ENCODE measurements at regions of chr7 and their contacts with region 1.

Region 1: GRCh38 chr7:3300651-3301378 is at the start of gene SDK1:
- DNase-seq: peak; percentile 84 to 96 (median 93)
- ATAC-seq: peak; percentile 94
- H3K4me3 ChIP-seq: peak within 1 kb of the TSS; percentile 53
- H3K4me3 Mint-ChIP-seq: peak within 1 kb of the TSS; percentile 39 to 94 (median 89)
- H3K27ac ChIP-seq: no peak within 1 kb of the TSS
- H3K27ac Mint-ChIP-seq: peak within 1 kb of the TSS in 6 of 9 donors; percentile 51 to 80 (median 70)
- H3K4me1 ChIP-seq: peaks cover 5 to 7% of the 10 kb centered on the region in 2 donors
- H3K4me1 Mint-ChIP-seq: peaks cover 7 to 26% (median 12%) of the 10 kb centered on the region in 7 donors
- H3K27me3 ChIP-seq: no peaks in the 10 kb centered on the region
- H3K27me3 Mint-ChIP-seq: peaks cover 4 to 55% (median 7%) of the 10 kb centered on the region in 5 donors
- total RNA-seq, gene SDK1: 0.07 to 2.5 (median 0.54) TPM

Region 2: GRCh38 chr7:3250725-3251124 is 50.1 kb before region 1 on chr7:
- CTCF ChIA-PET with region 1: no interaction called
- POLR2A ChIA-PET with region 1: no interaction called
- intact Hi-C with region 1: no loop called
- DNase-seq: no peak
- ATAC-seq: no peak
- H3K4me3 ChIP-seq: no peak overlapping the region
- H3K4me3 Mint-ChIP-seq: no peak overlapping the region
- H3K27ac ChIP-seq: no peak overlapping the region
- H3K27ac Mint-ChIP-seq: no peak overlapping the region
- H3K4me1 ChIP-seq: no peaks in the 10 kb centered on the region
- H3K4me1 Mint-ChIP-seq: peaks cover 0 to 4% (median 0%) of the 10 kb centered on the region in 7 donors
- H3K27me3 ChIP-seq: no peaks in the 10 kb centered on the region
- H3K27me3 Mint-ChIP-seq: peaks cover 0 to 9% (median 0%) of the 10 kb centered on the region in 5 donors

Region 3: GRCh38 chr7:3461923-3462322 is 161.1 kb after region 1 on chr7:
- CTCF ChIA-PET with region 1: interaction called, 3 read pairs
- POLR2A ChIA-PET with region 1: no interaction called
- intact Hi-C with region 1: loop called (anchors 1 to 2 kb)
- DNase-seq: peak; percentile 11 to 91 (median 86)
- ATAC-seq: peak; percentile 96
- H3K4me3 ChIP-seq: peak overlapping the region; percentile 19
- H3K4me3 Mint-ChIP-seq: peak overlapping the region; percentile 21 to 92 (median 81)
- H3K27ac ChIP-seq: peak overlapping the region; percentile 70
- H3K27ac Mint-ChIP-seq: peak overlapping the region; percentile 76 to 96 (median 93)
- H3K4me1 ChIP-seq: peaks cover 15 to 45% of the 10 kb centered on the region in 2 donors
- H3K4me1 Mint-ChIP-seq: peaks cover 20 to 90% (median 77%) of the 10 kb centered on the region in 7 donors
- H3K27me3 ChIP-seq: no peaks in the 10 kb centered on the region
- H3K27me3 Mint-ChIP-seq: no peaks in the 10 kb centered on the region

Region 4: GRCh38 chr7:3482147-3482964 is 181.5 kb after region 1 on chr7:
- CTCF ChIA-PET with region 1: no interaction called
- POLR2A ChIA-PET with region 1: no interaction called
- intact Hi-C with region 1: loop called in 1 of 2 experiments (anchors 5 kb)
- DNase-seq: no peak
- ATAC-seq: no peak
- H3K4me3 ChIP-seq: no peak overlapping the region
- H3K4me3 Mint-ChIP-seq: no peak overlapping the region
- H3K27ac ChIP-seq: no peak overlapping the region
- H3K27ac Mint-ChIP-seq: peak overlapping the region in 1 of 9 donors; percentile 83
- H3K4me1 ChIP-seq: no peaks in the 10 kb centered on the region
- H3K4me1 Mint-ChIP-seq: peaks cover 0 to 11% (median 0%) of the 10 kb centered on the region in 7 donors
- H3K27me3 ChIP-seq: no peaks in the 10 kb centered on the region
- H3K27me3 Mint-ChIP-seq: peaks cover 0 to 14% (median 0%) of the 10 kb centered on the region in 5 donors

Region 5: DNA sequence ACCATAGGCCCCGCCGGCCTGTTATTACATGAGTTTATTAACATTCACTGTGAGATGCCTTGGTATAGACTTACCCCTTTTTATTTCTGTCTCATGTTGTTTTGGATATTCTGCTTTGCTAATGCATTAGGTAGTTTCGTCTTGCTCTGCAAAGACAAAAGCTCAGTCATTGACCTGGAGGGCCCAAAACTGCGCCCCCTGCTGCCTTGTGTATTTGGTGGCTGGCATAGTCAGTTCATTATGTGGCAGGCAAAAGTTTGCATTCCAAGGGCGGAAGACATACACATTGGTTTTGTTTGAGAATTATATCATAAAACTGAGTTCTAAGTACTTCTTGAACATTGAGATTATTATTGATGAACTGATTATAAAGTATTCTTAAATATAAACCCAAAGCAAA is 372.7 kb after region 1 on chr7:
- CTCF ChIA-PET with region 1: interaction called, 4 read pairs
- POLR2A ChIA-PET with region 1: no interaction called
- intact Hi-C with region 1: loop called (anchors 1 to 5 kb)
- DNase-seq: peak; percentile 14 to 60 (median 46)
- ATAC-seq: peak; percentile 50
- H3K4me3 ChIP-seq: no peak overlapping the region
- H3K4me3 Mint-ChIP-seq: no peak overlapping the region
- H3K27ac ChIP-seq: no peak overlapping the region
- H3K27ac Mint-ChIP-seq: no peak overlapping the region
- H3K4me1 ChIP-seq: peaks cover 0 to 19% of the 10 kb centered on the region in 2 donors
- H3K4me1 Mint-ChIP-seq: peaks cover 0 to 12% (median 3%) of the 10 kb centered on the region in 7 donors
- H3K27me3 ChIP-seq: no peaks in the 10 kb centered on the region
- H3K27me3 Mint-ChIP-seq: no peaks in the 10 kb centered on the region

Region 6: GRCh38 chr7:3722396-3722922 is 421.6 kb after region 1 on chr7:
- CTCF ChIA-PET with region 1: no interaction called
- POLR2A ChIA-PET with region 1: no interaction called
- intact Hi-C with region 1: loop called in 1 of 2 experiments (anchors 5 kb)
- DNase-seq: peak in 6 of 9 donors; percentile 9 to 54 (median 35)
- ATAC-seq: peak; percentile 55
- H3K4me3 ChIP-seq: no peak overlapping the region
- H3K4me3 Mint-ChIP-seq: peak overlapping the region in 1 of 10 donors; percentile 14
- H3K27ac ChIP-seq: no peak overlapping the region
- H3K27ac Mint-ChIP-seq: no peak overlapping the region
- H3K4me1 ChIP-seq: no peaks in the 10 kb centered on the region
- H3K4me1 Mint-ChIP-seq: peaks cover 0 to 8% (median 0%) of the 10 kb centered on the region in 7 donors
- H3K27me3 ChIP-seq: no peaks in the 10 kb centered on the region
- H3K27me3 Mint-ChIP-seq: peaks cover 0 to 6% (median 0%) of the 10 kb centered on the region in 5 donors

Region 7: DNA sequence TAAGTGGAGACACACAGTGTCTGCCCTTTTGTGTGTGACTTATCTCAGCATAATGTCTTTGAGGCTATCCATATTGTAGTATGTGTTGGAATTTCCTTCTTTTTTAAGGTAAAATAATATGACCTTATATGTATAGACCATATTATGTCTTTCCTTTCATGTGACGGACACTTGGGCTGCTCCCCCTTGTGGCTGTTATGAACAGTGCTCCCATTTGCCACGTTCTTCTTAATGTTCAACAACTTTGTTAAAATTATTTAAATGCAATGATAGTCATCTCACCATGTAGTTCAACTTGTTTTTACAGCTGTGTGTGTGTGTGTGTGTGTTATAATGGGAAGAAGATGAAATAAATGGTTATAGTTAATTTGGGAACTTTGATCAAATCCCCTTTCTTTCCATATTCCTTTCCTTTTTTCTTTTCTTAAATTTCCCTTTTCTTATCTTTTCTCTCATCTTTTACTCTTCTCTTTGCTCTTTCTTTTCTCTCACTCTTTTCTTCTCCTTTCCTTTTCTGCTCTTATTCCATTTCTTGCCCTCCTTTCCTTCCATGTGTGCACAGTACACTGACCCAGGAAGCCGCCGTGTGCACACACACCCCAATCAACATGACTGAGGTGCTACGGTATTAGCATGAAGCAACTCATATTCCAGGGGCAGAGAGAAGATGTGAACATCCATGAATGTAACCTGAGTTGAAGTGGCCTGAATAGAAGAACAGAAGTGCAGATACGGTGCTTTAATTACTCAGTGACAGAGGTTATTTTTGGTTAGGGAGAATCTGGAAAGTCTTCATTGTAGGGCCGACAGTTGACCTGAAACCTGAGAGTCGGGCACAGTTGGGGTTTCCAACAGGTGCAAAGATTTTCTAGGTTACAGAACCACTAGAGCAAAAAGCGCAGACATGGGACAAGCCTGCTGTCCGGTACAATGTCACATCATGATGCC is 596.9 kb after region 1 on chr7:
- CTCF ChIA-PET with region 1: interaction called, 7 read pairs
- POLR2A ChIA-PET with region 1: no interaction called
- intact Hi-C with region 1: loop called in 1 of 2 experiments (anchors 1 kb)
- DNase-seq: peak in 7 of 9 donors; percentile 12 to 55 (median 45)
- ATAC-seq: peak; percentile 77
- H3K4me3 ChIP-seq: no peak overlapping the region
- H3K4me3 Mint-ChIP-seq: no peak overlapping the region
- H3K27ac ChIP-seq: no peak overlapping the region
- H3K27ac Mint-ChIP-seq: peak overlapping the region in 1 of 9 donors; percentile 12
- H3K4me1 ChIP-seq: no peaks in the 10 kb centered on the region
- H3K4me1 Mint-ChIP-seq: peaks cover 0 to 9% (median 0%) of the 10 kb centered on the region in 7 donors
- H3K27me3 ChIP-seq: no peaks in the 10 kb centered on the region
- H3K27me3 Mint-ChIP-seq: peaks cover 0 to 9% (median 0%) of the 10 kb centered on the region in 5 donors

Region 8: GRCh38 chr7:4744391-4745264 is 1443.8 kb after region 1 on chr7:
- CTCF ChIA-PET with region 1: no interaction called
- POLR2A ChIA-PET with region 1: no interaction called
- intact Hi-C with region 1: loop called in 1 of 2 experiments (anchors 10 kb)
- DNase-seq: peak; percentile 61 to 84 (median 80)
- ATAC-seq: peak; percentile 76
- H3K4me3 ChIP-seq: peak overlapping the region; percentile 65
- H3K4me3 Mint-ChIP-seq: peak overlapping the region; percentile 84 to 92 (median 88)
- H3K27ac ChIP-seq: peak overlapping the region; percentile 82
- H3K27ac Mint-ChIP-seq: peak overlapping the region; percentile 90 to 99 (median 96)
- H3K4me1 ChIP-seq: peaks cover 15 to 61% of the 10 kb centered on the region in 2 donors
- H3K4me1 Mint-ChIP-seq: peaks cover 45 to 89% (median 79%) of the 10 kb centered on the region in 7 donors
- H3K27me3 ChIP-seq: no peaks in the 10 kb centered on the region
- H3K27me3 Mint-ChIP-seq: no peaks in the 10 kb centered on the region